Astrocyte of the cerebellum (primary cell): ENCODE measurements at regions of chr18 and their contacts with region 1.

Region 1: DNA sequence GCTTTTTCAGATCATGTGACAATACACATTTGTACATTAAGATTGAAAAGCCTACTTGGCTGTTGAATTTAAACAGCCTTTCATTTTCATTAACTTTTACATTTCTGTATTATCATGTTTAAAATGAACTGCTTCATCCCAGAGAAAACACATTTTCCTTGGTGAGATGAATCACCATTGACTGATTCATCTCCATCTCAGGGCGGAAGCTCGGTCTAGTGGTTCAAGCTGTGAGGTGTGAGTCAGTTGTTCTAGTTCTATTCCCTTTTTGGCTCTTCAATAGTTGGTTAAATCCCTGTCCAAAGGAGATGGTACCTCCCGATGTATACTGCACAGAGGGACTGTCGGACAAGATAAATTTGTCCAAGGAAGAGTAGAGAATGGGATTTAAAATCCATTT is 189.7 kb downstream of the ADCYAP1 start:
- DNase-seq: peak; percentile 71
- H3K4me3 ChIP-seq: no peak overlapping the region
- CTCF ChIP-seq: no peak

Region 2: GRCh38 chr18:1018181-1018681 is 76.2 kb before region 1 on chr18:
- in situ Hi-C with region 1: loop called (anchors 5 kb)
- DNase-seq: peak; percentile 84
- H3K4me3 ChIP-seq: no peak overlapping the region
- CTCF ChIP-seq: no peak

Region 3: GRCh38 chr18:1147730-1148129 is 53.3 kb after region 1 on chr18:
- in situ Hi-C with region 1: no loop called
- DNase-seq: peak; percentile 2
- H3K4me3 ChIP-seq: no peak overlapping the region
- CTCF ChIP-seq: no peak

Region 4: GRCh38 chr18:1173593-1173992 is 79.2 kb after region 1 on chr18:
- in situ Hi-C with region 1: no loop called
- DNase-seq: no peak
- H3K4me3 ChIP-seq: no peak overlapping the region
- CTCF ChIP-seq: no peak